Ascending aorta (tissue), 2 donors: ENCODE measurements at regions of chr7 and their contacts with region 1.

Region 1: DNA sequence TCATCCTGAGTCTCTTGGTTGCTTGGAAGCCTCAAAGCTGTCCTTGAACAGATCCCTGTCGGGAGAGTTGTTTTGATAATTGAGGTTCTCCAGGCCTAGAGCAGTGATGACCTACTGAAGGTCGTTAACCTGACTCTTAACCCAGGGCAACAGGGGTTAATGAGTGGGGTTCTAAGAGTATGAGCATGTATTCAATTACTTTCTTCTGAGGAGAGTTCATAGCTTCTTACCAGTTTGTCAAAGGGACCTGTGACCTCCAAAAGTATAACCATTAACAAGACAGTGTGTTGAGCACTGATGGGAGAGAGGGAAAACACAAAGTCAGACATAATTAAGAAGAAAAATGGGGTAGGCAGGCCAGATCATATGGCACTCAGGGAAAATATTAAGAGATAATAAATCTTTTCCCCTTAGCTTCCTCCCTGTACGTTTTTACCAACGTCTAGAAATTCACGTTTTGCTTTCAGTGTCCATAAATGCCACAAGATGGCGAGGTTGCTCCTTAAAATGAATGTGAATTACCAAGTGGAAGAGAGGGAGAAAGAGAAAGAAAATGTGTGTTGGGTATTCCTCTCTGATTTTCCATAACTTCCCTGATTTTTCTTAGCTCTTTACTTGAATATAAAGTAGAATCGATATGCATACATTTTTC is 97.6 kb downstream of the SUGCT start:
- DNase-seq: peak in 1 of 2 donors; percentile 46
- H3K4me3 ChIP-seq: no peak overlapping the region
- H3K27ac ChIP-seq: no peak overlapping the region
- H3K4me1 ChIP-seq: no peaks in the 10 kb centered on the region
- H3K27me3 ChIP-seq: no peaks in the 10 kb centered on the region
- CTCF ChIP-seq: peak; percentile 51 to 67 (median 54)

Region 2: GRCh38 chr7:39948956-39949928 is 283.1 kb before region 1 on chr7:
- intact Hi-C with region 1: no loop called
- DNase-seq: peak; percentile 98 to 99
- H3K4me3 ChIP-seq: peak overlapping the region; percentile 98 to 100
- H3K27ac ChIP-seq: peak overlapping the region; percentile 100
- H3K4me1 ChIP-seq: peaks cover 4 to 15% of the 10 kb centered on the region in 2 donors
- H3K27me3 ChIP-seq: no peaks in the 10 kb centered on the region
- CTCF ChIP-seq: no peak

Region 3: GRCh38 chr7:40221836-40222235 is 10.5 kb before region 1 on chr7:
- intact Hi-C with region 1: no loop called
- DNase-seq: peak in 1 of 2 donors; percentile 67
- H3K4me3 ChIP-seq: no peak overlapping the region
- H3K27ac ChIP-seq: peak overlapping the region; percentile 55 to 57
- H3K4me1 ChIP-seq: peaks cover 0 to 5% of the 10 kb centered on the region in 2 donors
- H3K27me3 ChIP-seq: no peaks in the 10 kb centered on the region
- CTCF ChIP-seq: no peak

Region 4: GRCh38 chr7:40468891-40469864 is 236.8 kb after region 1 on chr7:
- intact Hi-C with region 1: no loop called
- DNase-seq: peak in 1 of 2 donors; percentile 74
- H3K4me3 ChIP-seq: no peak overlapping the region
- H3K27ac ChIP-seq: peak overlapping the region; percentile 90 to 93
- H3K4me1 ChIP-seq: peaks cover 0 to 24% of the 10 kb centered on the region in 2 donors
- H3K27me3 ChIP-seq: no peaks in the 10 kb centered on the region
- CTCF ChIP-seq: no peak

Region 5: DNA sequence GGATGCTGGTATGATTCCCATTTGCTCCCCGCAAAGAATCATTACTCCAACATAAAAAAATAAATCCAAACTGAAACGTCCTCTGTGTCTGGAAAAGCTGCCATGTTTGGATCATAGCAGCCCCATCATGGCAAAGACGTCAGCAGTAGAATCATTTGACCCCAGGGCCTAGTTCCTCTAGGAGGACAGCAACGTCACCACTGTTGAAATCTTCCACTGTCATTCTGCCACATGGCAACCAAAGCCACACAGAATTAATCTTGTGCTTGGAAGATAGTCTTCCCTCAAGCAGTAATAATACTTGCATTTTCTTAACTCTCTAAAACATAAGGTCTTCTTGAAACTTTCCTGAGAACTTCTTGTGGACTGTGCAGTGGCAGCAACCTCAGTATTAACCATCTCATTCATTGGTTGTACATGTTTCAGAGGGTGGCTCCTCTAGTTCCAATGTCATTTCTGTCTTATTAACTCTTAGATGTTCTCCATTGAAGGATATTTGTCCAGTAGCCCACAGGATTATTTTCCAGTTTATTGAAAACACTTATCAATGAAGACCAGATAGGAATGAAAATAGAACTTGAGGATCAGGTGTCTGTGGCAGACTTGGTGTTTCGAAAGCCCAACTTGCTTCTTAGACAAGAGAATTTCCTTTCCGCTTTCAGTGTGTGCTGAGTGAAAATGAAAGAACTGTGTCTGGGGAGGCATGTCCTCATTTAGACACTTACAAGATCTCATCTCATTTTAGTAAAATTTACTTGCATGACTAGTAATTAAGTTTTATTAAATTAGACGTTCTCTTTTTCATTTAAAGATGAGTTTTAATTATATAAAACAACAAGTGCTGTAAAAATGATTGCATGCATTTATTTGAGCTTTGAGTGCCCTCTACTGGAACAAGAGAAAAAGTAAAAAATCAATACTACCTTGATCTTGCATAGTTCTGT is 1499.4 kb after region 1 on chr7:
- intact Hi-C with region 1: loop called (anchors 10 kb)
- DNase-seq: no peak
- H3K4me3 ChIP-seq: no peak overlapping the region
- H3K27ac ChIP-seq: no peak overlapping the region
- H3K4me1 ChIP-seq: peaks cover 0 to 9% of the 10 kb centered on the region in 2 donors
- H3K27me3 ChIP-seq: no peaks in the 10 kb centered on the region
- CTCF ChIP-seq: peak in 2 of 3 experiments; percentile 23 to 50